Colonic mucosa (tissue), 4 donors: ENCODE measurements at regions of chrX and their contacts with region 1.

Region 1: DNA sequence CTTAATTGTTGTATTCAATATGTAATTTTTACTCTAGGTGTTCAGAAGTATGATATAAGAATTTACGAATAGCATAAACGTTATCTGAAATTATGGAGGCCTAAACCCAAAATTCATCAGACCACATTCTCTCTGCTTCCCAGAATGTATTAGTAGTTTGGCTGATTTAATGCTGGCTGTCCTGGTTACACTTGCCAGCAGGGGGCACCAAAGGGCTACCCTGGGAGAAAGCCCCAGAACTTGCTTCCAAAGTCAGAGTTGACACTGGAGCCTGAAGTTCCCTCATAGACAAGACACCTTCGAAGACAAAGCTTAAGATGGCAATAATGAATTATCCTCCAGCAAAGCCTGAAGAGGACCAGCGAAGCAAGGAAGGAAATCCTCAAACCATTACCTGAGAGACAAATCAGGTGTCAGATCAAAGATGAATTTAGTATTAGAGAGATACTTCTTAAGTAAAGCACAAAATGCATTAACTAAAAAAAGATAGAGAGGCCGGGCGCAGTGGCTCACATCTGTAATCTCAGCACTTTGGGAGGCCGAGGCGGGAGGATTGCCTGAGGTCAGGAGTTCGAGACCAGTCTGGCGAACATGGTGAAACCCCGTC is 11.3 kb upstream of the ANOS1 start:
- DNase-seq: peak; percentile 68
- H3K4me3 ChIP-seq: no peak overlapping the region
- H3K27ac ChIP-seq: no peak overlapping the region
- H3K4me1 ChIP-seq: no peaks in the 10 kb centered on the region
- H3K27me3 ChIP-seq: no peaks in the 10 kb centered on the region
- CTCF ChIP-seq: peak; percentile 75

Region 2: DNA sequence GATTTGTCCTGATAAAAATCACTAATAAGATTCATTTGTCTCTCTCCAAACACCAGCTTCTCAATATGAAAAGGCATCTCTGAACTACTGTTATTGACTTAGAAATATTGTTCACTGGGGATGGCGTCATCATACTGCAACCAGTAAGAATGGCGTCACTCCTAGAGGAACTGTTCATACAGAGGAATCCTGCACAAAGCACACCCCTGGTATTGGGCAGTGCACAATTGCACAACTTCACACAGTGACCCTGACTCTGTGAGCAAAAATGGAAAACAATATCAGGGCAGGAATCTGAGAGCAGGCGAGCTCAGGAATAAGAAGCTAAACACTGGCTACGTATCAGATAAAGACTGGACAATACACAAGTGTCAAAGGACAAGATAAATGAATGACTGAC is 749.4 kb before region 1 on chrX:
- intact Hi-C with region 1: loop called (anchors 2 kb)
- DNase-seq: no peak
- H3K4me3 ChIP-seq: no peak overlapping the region
- H3K27ac ChIP-seq: no peak overlapping the region
- H3K4me1 ChIP-seq: no peaks in the 10 kb centered on the region
- H3K27me3 ChIP-seq: no peaks in the 10 kb centered on the region
- CTCF ChIP-seq: no peak

Region 3: GRCh38 chrX:8179656-8180055 is 563.6 kb before region 1 on chrX:
- intact Hi-C with region 1: loop called (anchors 10 kb)
- DNase-seq: no peak
- H3K4me3 ChIP-seq: no peak overlapping the region
- H3K27ac ChIP-seq: no peak overlapping the region
- H3K4me1 ChIP-seq: no peaks in the 10 kb centered on the region
- H3K27me3 ChIP-seq: no peaks in the 10 kb centered on the region
- CTCF ChIP-seq: peak; percentile 20

Region 4: DNA sequence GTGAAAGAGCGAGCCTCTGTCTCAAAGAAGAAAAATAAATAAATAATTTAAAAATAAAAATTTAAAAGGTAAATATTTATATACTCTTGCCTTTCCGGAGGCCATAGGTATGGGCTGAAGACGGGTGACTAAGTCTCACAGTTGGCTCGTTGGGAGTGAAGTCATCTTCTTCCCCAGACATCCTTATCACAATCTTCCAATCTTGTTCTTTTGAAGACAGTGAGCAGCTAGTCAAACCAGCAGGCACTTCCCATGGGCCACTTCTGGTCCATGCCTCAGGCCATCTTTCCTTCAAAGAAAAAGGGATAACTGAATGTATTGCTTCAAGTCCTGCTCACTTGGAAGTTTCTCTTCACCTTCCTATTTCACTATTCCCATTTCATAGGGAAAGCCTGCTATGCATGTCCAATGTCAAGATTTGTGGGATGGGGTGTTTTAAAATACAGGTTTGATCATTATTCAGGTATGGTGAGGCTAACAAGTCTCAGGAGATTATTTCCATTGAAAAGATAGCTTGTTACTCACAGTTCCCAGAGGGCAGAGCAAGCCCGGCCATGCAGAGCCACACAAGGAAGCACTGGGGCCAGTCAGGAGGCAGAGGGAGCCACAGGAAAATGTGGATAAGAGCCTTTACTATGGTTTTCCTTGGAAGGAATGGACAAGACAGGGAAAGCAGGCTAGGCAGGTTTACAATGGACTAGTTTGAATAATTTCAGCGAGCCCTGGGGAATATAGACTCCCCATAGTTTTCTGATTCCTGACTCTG is 538.9 kb before region 1 on chrX:
- intact Hi-C with region 1: no loop called
- DNase-seq: no peak
- H3K4me3 ChIP-seq: no peak overlapping the region
- H3K27ac ChIP-seq: no peak overlapping the region
- H3K4me1 ChIP-seq: no peaks in the 10 kb centered on the region
- H3K27me3 ChIP-seq: no peaks in the 10 kb centered on the region
- CTCF ChIP-seq: no peak

Region 5: DNA sequence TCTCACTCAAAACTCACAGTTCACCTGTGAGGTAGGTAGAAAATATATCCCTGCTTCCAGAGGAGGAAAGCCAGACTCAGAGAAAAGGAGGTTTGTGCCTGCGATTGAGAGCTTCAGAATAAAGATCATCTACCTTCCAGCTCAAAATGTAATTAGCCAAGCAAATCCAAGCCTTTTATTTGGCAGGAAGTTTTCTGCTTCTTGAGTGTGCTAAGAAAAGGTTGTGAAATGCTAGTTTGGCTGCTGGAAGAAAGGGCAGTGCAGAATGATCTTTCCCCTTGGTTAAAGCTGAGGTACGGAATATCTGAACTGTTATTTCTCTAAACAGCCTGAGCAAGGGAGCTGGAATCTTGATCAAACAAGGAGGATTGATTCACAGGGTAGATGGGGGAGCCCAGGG is 338.3 kb before region 1 on chrX:
- intact Hi-C with region 1: no loop called
- DNase-seq: no peak
- H3K4me3 ChIP-seq: no peak overlapping the region
- H3K27ac ChIP-seq: no peak overlapping the region
- H3K4me1 ChIP-seq: no peaks in the 10 kb centered on the region
- H3K27me3 ChIP-seq: no peaks in the 10 kb centered on the region
- CTCF ChIP-seq: no peak

Region 6: DNA sequence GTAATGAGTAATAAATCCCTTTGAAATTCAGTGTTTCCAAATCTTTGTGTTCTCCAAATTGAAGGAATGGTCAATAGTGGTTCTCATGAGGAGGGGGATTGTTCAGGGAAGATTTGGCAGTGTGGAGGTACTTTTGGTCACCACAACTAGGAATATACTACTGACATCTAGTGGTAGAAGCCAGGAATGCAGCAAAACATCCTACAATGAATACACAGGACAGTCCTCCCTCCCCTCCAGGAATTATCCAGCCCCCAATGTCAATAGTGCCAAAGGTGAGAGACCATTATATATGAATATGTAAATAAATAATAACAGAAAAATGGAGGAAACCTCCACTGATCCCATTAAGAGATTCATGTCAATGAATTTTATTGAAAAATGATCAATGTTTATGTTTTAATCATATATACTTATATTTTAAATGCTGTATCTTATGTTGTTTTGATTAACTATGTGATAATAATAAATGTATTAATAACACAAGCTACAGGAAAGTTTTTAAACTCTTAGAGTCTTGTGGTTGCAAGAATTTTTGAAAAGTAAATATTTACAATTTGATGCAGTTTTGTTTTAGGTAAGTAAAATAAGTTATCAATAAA is 72.3 kb after region 1 on chrX:
- intact Hi-C with region 1: loop called (anchors 2 kb)
- DNase-seq: peak; percentile 42
- H3K4me3 ChIP-seq: no peak overlapping the region
- H3K27ac ChIP-seq: no peak overlapping the region
- H3K4me1 ChIP-seq: no peaks in the 10 kb centered on the region
- H3K27me3 ChIP-seq: no peaks in the 10 kb centered on the region
- CTCF ChIP-seq: peak; percentile 72

Region 7: DNA sequence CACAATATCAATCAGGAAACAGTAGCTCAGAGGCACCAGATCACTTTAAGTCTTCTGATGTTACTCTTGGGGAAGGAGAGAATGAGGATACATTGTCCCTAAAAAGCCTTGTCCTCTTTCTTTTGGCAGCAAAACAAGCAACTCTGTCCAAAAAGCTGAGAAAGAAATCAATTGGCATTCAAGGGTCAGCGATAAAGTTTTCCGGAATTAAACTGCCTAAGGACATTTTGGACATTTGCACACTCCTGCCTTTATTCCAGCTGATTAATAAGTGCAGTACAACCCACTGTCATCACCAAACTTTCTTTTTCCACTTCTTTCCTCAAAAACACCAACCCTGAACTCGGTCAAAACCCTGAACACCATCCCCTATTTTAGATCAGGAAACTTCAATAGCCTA is 143.8 kb after region 1 on chrX:
- intact Hi-C with region 1: no loop called
- DNase-seq: no peak
- H3K4me3 ChIP-seq: no peak overlapping the region
- H3K27ac ChIP-seq: no peak overlapping the region
- H3K4me1 ChIP-seq: no peaks in the 10 kb centered on the region
- H3K27me3 ChIP-seq: no peaks in the 10 kb centered on the region
- CTCF ChIP-seq: no peak

Region 8: DNA sequence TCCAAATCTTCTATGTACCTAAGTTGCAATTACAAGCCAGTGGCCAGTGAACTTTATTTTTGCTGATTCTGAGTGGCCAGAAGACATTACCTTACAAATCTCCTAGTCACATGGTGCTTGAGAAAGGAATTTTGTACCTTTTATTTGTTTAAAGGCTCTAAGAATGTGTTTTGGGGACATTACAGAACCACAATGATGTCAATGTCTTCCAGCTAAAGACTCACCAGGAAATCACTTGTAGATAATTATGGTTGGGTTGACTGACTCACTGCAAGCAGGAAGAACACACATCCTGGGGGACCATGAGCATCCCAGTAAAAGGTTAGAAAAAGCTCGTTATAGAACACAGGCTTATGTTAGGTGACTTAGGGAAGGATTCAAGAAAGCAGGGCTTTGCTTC is 410.0 kb after region 1 on chrX:
- intact Hi-C with region 1: no loop called
- DNase-seq: no peak
- H3K4me3 ChIP-seq: no peak overlapping the region
- H3K27ac ChIP-seq: no peak overlapping the region
- H3K4me1 ChIP-seq: no peaks in the 10 kb centered on the region
- H3K27me3 ChIP-seq: no peaks in the 10 kb centered on the region
- CTCF ChIP-seq: no peak

Region 9: GRCh38 chrX:9708904-9709553 is 965.8 kb after region 1 on chrX:
- intact Hi-C with region 1: loop called (anchors 10 kb)
- DNase-seq: peak; percentile 78
- H3K4me3 ChIP-seq: no peak overlapping the region
- H3K27ac ChIP-seq: no peak overlapping the region
- H3K4me1 ChIP-seq: no peaks in the 10 kb centered on the region
- H3K27me3 ChIP-seq: no peaks in the 10 kb centered on the region
- CTCF ChIP-seq: peak; percentile 90